ENCODE measurements at regions of chr10 and their contacts with region 1.

Region 1: DNA sequence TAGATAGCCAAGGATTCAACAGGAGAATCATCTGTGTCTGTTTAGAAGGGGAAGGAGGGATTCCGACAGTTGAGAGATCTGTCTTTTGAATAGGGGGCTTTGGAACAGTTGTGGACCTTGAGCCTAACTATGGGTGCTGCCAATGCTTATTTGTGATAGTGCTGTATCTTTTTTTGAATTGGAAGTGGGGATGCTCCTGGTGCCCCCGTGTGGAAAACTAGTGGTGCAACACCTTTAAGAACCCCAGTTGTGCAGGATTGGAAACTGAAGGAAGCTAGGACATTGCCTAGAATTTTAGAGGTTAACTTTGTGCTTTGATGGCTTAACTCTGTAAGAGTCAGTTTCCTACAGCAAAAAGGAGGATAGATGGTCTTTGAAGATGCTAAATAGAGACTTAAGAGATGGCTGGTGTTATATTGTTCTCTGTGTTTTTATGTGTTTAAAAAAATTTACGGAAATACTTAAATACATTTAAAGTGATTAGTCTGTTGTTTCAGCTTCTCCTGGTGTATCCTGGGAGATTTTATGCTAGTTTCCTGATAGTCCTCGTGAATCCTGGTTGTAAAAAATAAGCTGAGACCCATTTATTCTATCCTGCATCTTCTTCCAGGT is 69.3 kb downstream of the AP3M1 start:
- DNase-seq: peak; percentile 76
- H3K4me3 Mint-ChIP-seq: no peak overlapping the region
- H3K27ac Mint-ChIP-seq: no peak overlapping the region
- H3K4me1 Mint-ChIP-seq: peaks cover 23% of the 10 kb centered on the region
- H3K27me3 Mint-ChIP-seq: no peaks in the 10 kb centered on the region
- CTCF ChIP-seq: peak; percentile 71

Region 2: DNA sequence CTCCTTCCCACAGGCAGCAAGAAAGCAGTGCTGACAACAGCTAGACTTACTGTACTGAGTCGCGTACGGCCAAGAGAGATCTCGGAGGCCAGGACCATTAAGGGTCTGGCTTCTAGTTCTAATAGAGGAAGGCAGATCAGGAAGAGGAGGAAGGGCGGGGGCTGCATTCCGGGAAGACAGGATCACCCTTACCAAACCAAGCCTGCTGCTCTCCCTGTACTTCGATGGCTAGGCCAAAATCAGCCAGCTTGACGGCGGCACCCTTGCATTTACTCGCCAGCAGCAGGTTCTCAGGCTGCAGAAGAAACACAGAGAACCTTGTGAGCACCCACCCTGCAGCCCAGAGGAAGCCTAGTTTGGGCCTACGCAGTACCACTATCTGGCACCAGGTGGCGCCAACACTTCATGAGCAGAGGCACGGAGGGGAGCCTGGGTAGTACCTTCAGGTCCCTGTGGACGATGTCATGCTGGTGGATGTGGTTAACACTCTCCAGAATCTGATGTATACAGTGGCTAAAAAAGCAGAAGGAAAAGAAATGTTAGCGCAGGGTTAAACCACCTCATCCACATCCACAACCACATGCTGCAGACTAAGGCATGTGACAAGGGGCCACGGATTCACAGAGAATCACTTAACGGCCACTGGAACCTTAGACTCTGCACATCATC is 232.3 kb before region 1 on chr10:
- CTCF ChIA-PET with region 1: interaction called, 16 read pairs
- POLR2A ChIA-PET with region 1: no interaction called
- intact Hi-C with region 1: no loop called
- DNase-seq: peak; percentile 79
- H3K4me3 Mint-ChIP-seq: no peak overlapping the region
- H3K27ac Mint-ChIP-seq: no peak overlapping the region
- H3K4me1 Mint-ChIP-seq: no peaks in the 10 kb centered on the region
- H3K27me3 Mint-ChIP-seq: no peaks in the 10 kb centered on the region
- CTCF ChIP-seq: peak; percentile 98

Region 3: DNA sequence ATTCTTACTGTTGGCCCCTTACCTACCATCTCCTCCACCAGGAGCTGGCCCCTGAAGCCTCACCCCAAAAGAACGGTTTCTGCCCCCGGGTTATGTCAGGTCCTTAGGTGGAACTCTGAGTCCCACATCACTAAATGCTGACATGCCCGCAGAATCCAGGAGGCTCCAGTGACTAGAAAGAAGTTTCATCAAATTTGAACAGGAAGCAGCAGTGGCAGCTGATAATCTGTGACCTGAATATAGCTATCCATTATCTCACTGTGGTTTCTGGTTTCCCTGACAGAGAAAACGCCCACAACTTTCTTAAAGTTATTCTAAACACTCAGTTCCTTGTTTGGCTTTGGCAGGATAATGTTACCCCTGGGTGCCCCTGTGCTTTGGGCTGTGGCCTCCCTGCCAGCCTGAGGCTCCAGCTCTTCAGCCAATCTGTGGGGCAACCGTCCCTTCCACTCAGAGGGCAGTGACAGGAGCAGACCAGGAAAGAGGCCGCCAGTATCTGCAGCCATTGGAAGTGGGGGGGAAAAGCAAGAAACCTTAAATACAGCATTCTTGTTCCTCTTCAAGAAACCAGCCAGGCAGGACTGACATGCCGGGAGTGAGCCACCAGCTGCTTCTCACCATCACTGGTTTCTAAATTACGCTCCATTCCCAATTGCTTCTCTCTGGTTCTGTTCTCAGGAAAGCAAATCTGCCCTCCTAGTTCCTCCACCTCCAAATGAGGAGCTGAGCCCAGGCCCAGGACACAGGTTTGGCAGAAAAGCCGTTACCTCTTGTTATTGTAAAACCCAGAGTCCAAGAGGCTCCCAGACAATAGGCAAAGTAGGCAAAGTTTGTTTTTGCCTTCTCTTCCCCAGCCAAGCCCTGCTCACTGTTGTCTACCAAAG is 124.6 kb before region 1 on chr10:
- CTCF ChIA-PET with region 1: interaction called, 9 read pairs
- POLR2A ChIA-PET with region 1: no interaction called
- intact Hi-C with region 1: loop called (anchors 2 kb)
- DNase-seq: no peak
- H3K4me3 Mint-ChIP-seq: no peak overlapping the region
- H3K27ac Mint-ChIP-seq: no peak overlapping the region
- H3K4me1 Mint-ChIP-seq: peaks cover 4% of the 10 kb centered on the region
- H3K27me3 Mint-ChIP-seq: no peaks in the 10 kb centered on the region
- CTCF ChIP-seq: no peak

Region 4: GRCh38 chr10:74056036-74056818 is 25.1 kb before region 1 on chr10:
- CTCF ChIA-PET with region 1: interaction called, 12 read pairs
- POLR2A ChIA-PET with region 1: interaction called, 8 read pairs
- intact Hi-C with region 1: no loop called
- DNase-seq: peak; percentile 47
- H3K4me3 Mint-ChIP-seq: no peak overlapping the region
- H3K27ac Mint-ChIP-seq: peak overlapping the region; percentile 81
- H3K4me1 Mint-ChIP-seq: peaks cover 26% of the 10 kb centered on the region
- H3K27me3 Mint-ChIP-seq: no peaks in the 10 kb centered on the region
- CTCF ChIP-seq: no peak

Region 5: DNA sequence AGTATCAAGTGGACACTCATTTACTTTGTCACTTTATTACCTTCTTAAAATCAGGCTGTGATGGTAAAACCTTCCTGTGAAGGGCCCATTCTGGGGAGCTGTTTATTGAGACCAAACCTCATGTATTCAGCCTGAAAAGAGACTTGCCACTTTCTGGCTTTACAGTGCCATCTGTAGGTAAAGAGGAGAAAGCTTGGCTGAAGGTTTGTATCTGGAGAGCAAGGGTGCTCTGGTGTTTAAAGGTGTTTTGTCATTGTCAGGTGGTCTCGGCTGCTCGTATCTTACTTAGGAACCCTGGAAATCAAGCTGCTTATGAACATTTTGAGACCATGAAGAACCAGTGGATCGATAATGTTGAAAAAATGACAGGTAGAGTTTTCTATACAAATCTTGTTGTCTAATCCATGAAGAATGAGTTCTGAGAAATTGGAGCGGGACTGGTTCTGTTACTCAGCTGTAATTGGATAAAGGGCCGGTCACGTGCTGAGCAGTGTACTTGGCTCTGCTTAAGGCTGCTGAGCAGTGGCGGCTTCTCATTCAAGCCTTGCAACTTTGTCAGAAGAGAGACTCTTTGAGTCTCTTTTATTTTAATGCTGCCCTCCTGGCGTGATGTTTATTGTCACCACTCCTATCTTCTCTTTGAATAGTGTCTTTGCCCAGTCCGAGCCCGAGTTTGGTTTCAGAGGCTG is 22.4 kb after region 1 on chr10:
- CTCF ChIA-PET with region 1: interaction called, 16 read pairs
- POLR2A ChIA-PET with region 1: interaction called, 4 read pairs
- intact Hi-C with region 1: no loop called
- DNase-seq: peak; percentile 33
- H3K4me3 Mint-ChIP-seq: no peak overlapping the region
- H3K27ac Mint-ChIP-seq: no peak overlapping the region
- H3K4me1 Mint-ChIP-seq: peaks cover 6% of the 10 kb centered on the region
- H3K27me3 Mint-ChIP-seq: no peaks in the 10 kb centered on the region
- CTCF ChIP-seq: peak; percentile 24

Region 6: DNA sequence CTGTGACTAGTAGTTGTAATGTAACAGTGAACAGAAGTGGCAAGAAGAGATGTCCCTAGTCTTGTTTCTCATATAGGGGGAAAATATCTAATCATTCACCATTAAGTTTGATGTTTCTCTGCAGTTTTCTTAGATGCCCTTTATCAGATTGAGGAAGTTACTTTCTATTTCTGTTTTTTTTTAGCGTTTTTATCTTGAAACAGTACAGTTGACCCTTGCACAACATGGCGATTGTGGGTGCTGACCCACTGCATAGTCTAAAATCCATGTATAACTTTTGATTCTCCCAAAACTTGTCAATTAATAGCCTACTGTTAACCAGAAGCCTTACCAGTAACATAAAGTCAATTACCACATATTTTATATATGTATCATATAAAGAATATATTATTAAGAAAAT is 261.7 kb after region 1 on chr10:
- CTCF ChIA-PET with region 1: no interaction called
- POLR2A ChIA-PET with region 1: no interaction called
- intact Hi-C with region 1: no loop called
- DNase-seq: no peak
- H3K4me3 Mint-ChIP-seq: no peak overlapping the region
- H3K27ac Mint-ChIP-seq: no peak overlapping the region
- H3K4me1 Mint-ChIP-seq: no peaks in the 10 kb centered on the region
- H3K27me3 Mint-ChIP-seq: no peaks in the 10 kb centered on the region
- CTCF ChIP-seq: no peak